ENCODE measurements at regions of chr11 and their contacts with region 1.

Region 1: DNA sequence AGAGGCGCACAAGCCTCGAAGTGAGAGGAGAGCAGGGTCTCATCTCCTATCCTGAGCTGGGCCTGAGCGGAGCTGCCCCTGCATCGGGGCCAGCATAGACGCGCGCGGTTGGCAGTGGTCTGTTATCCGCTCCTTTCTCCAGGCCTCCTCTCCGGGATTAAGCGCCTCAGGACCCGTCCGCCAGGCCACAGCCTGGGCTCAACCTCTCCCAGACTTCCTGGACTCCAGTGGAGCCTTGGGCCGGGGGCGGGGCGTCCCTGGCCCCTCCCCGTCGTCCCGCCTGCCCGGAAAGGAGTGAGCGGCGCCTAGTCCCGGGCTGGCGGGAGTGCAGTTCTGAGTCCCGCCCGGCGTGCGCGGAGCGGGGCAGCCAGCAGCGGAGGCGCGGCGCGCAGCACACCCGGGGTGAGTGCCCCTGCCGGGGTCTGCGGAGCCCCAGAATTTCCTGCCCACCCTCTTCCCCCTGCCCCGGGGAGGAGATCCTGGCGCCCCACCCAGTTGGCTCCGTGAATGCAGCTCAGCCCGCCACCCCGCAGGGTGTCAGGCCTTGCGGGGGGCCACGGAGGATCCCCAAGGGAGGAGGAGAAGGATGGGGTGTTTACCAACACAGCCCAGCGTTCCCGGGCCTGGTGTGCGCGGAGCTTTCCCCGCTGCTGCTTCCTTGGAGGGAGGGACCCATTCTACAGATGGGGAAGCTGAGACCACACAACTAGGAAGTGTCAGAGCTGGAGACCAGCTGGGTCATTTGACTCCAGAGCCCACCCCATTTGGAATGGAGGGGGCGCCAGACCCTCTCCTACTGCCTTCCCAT is at the start of gene TCIRG1:
- DNase-seq: peak; percentile 67
- ATAC-seq: peak; percentile 75
- H3K4me3 Mint-ChIP-seq: peak within 1 kb of the TSS; percentile 91
- H3K27ac Mint-ChIP-seq: peak within 1 kb of the TSS; percentile 93
- H3K4me1 Mint-ChIP-seq: peaks cover 36% of the 10 kb centered on the region
- H3K27me3 Mint-ChIP-seq: no peaks in the 10 kb centered on the region
- total RNA-seq, gene TCIRG1: 238 to 263 TPM

Region 2: GRCh38 chr11:68014157-68014966 is 24.6 kb before region 1 on chr11:
- CTCF ChIA-PET with region 1: no interaction called
- POLR2A ChIA-PET with region 1: no interaction called
- DNase-seq: no peak
- ATAC-seq: peak; percentile 17
- H3K4me3 Mint-ChIP-seq: no peak overlapping the region
- H3K27ac Mint-ChIP-seq: no peak overlapping the region
- H3K4me1 Mint-ChIP-seq: peaks cover 9% of the 10 kb centered on the region
- H3K27me3 Mint-ChIP-seq: no peaks in the 10 kb centered on the region

Region 3: DNA sequence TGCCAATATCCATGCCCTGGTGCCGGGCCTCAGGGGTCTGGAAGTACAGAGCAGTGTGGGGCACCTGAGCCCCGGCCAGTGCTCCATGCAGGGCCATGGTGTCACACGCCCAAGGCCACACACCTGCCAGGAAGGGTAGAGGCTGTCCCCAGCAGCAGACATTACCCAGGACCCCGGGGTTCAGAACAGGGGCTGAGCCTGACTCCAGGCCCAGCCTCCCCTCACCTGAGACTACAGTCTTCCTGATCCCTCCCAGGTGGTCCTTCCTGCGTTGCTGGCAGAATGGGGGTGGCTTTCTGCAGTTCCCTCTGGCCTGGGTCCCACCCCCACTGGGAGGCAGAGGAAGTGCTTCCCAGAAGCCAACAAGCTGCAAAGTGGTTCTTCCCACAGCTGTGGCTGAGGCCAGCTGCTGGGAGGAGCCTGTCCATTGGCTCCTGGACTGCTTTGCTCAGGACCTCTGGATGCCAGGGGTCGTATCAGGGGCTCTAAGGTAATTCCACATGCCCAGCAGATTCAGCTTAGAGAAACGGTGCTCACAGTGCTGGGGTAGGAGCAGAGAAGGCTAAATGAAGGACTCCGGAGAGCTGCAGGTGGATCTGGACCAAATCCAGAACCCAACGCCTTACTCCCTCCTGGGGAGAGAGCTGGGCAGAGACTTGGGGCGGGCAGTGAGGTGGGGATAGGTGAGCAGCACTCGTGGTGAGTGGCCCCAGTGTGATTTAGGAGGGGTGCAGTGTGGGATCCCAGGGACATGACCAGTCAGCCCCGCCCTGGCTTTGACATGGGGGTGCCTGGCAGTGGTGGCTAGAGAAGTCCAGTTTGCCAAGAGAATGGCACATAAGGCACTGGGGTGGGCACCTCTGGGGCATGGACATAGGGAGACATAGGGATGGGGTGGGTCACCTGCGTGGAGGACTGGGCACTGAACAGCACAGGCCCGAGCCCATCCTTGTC is 12.5 kb after region 1 on chr11:
- CTCF ChIA-PET with region 1: no interaction called
- POLR2A ChIA-PET with region 1: interaction called, 17 read pairs
- DNase-seq: no peak
- ATAC-seq: no peak
- H3K4me3 Mint-ChIP-seq: no peak overlapping the region
- H3K27ac Mint-ChIP-seq: peak overlapping the region; percentile 57
- H3K4me1 Mint-ChIP-seq: peaks cover 2% of the 10 kb centered on the region
- H3K27me3 Mint-ChIP-seq: no peaks in the 10 kb centered on the region